ENCODE measurements at regions of chr10 and their contacts with region 1.

Region 1: DNA sequence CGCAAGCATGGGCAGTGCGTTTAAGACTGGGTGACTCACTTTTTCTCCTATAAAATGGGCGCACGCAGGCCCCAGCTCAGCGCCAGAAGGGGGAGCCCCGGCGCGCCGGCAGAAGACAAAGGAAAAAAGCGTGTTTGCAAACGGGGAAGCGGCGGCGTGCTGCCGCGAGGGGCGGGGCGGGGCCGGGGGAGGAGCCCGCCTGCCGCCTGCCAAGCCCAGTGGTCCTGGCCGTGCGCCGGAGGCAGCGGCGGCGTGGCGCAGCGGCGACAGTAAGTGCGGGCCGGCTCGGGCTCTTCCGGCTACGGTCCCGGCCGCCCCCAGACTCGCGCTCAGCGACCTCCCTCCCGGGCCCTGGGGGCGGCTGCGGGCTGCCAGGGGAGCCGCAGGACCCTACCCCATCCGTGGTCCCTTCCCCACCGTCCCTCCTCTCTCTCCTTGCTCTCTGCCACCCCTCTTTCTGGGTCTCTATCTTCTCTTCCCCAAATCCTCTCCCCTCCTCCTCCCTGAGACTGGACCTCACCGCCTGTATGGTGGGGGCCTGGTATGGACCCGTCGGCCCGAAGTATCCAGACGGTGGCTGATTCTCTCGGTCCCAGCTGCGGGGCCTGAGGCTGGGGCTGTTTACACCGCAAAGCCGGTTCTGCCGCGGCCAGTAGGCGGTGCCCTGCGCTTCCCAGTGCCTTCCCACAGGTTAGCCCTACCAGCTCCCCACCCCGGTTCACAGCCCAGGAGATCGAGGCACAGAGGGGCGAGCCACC is at the start of gene SLC29A3:
- DNase-seq: peak; percentile 79 to 83
- ATAC-seq: peak; percentile 93 to 96
- H3K4me3 ChIP-seq: peak within 1 kb of the TSS; percentile 78
- H3K27ac ChIP-seq: peak within 1 kb of the TSS; percentile 89 to 96
- H3K4me1 ChIP-seq: peaks cover 14% of the 10 kb centered on the region
- CTCF ChIP-seq: peak; percentile 81
- EP300 ChIP-seq: no peak
- POLR2A ChIP-seq: peak; percentile 73
- RAD21 ChIP-seq: peak; percentile 79 to 81
- polyA plus RNA-seq, gene SLC29A3: 7.2 and 12.6 TPM in 2 replicates

Region 2: GRCh38 chr10:71161425-71161824 is 157.8 kb before region 1 on chr10:
- CTCF ChIA-PET with region 1: no interaction called
- POLR2A ChIA-PET with region 1: no interaction called
- DNase-seq: no peak
- ATAC-seq: no peak
- H3K4me3 ChIP-seq: no peak overlapping the region
- H3K27ac ChIP-seq: no peak overlapping the region
- H3K4me1 ChIP-seq: no peaks in the 10 kb centered on the region
- CTCF ChIP-seq: no peak
- EP300 ChIP-seq: no peak
- POLR2A ChIP-seq: no peak
- RAD21 ChIP-seq: no peak

Region 3: DNA sequence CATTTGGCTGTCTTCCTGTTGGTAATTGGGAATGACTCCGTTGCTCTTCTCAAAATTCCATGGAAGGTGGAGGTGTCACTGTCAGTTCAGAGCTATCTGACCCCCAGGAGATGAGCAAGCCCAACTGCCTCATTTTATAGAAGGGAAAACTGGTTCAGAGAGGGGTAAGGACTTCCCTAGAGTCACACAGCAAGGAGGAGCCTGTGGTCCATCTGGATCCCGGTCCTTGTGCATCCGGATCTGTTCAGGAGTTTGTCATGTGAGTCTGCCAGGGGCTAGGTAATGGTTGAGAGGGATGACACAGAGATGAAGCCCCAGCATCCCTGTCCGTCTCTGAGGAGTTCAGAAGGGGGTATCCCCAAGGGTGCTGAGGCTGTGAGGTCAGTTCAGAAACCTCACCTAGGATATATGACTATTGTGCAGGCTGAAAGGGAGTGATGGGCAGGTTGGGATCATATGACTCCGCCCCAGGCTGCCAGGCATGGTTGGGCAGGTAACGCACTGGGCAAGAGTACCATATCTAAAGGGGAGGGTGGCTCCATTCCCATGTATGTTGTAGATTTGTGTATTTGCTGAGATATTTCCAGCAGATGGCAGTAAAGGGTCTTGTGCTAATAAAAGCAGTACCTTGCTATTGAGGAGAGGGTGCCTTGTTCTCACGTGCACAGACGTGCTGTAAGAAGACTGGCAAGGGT is 16.2 kb before region 1 on chr10:
- CTCF ChIA-PET with region 1: interaction called, 41 read pairs
- POLR2A ChIA-PET with region 1: no interaction called
- DNase-seq: peak; percentile 73
- ATAC-seq: peak; percentile 75 to 90
- H3K4me3 ChIP-seq: no peak overlapping the region
- H3K27ac ChIP-seq: no peak overlapping the region
- H3K4me1 ChIP-seq: no peaks in the 10 kb centered on the region
- CTCF ChIP-seq: peak; percentile 56
- EP300 ChIP-seq: no peak
- POLR2A ChIP-seq: no peak
- RAD21 ChIP-seq: peak; percentile 37 to 52; a peak in 4 of 5 replicates

Region 4: GRCh38 chr10:71343392-71343773 is 24.2 kb after region 1 on chr10:
- CTCF ChIA-PET with region 1: interaction called, 61 read pairs
- POLR2A ChIA-PET with region 1: interaction called, 9 read pairs
- DNase-seq: peak; percentile 32 to 51
- ATAC-seq: peak in 1 of 2 experiments; percentile 55; a peak in 3 of 6 replicates
- H3K4me3 ChIP-seq: no peak overlapping the region
- H3K27ac ChIP-seq: peak overlapping the region; percentile 80 to 92
- H3K4me1 ChIP-seq: peaks cover 79% of the 10 kb centered on the region
- CTCF ChIP-seq: no peak
- EP300 ChIP-seq: peak in 1 of 2 experiments; percentile 39; a peak in 1 of 5 replicates
- POLR2A ChIP-seq: no peak
- RAD21 ChIP-seq: no peak

Region 5: GRCh38 chr10:71378336-71379117 is 59.3 kb after region 1 on chr10:
- CTCF ChIA-PET with region 1: interaction called, 977 read pairs
- POLR2A ChIA-PET with region 1: interaction called, 36 read pairs
- DNase-seq: no peak
- ATAC-seq: no peak
- H3K4me3 ChIP-seq: no peak overlapping the region
- H3K27ac ChIP-seq: no peak overlapping the region
- H3K4me1 ChIP-seq: peaks cover 12% of the 10 kb centered on the region
- CTCF ChIP-seq: no peak
- EP300 ChIP-seq: no peak
- POLR2A ChIP-seq: no peak
- RAD21 ChIP-seq: no peak

Region 6: GRCh38 chr10:71396084-71396720 is 77.0 kb after region 1 on chr10:
- CTCF ChIA-PET with region 1: interaction called, 977 read pairs
- POLR2A ChIA-PET with region 1: interaction called, 22 read pairs
- DNase-seq: peak; percentile 75 to 76
- ATAC-seq: peak; percentile 86 to 94
- H3K4me3 ChIP-seq: peak overlapping the region; percentile 58
- H3K27ac ChIP-seq: peak overlapping the region; percentile 71 to 91
- H3K4me1 ChIP-seq: peaks cover 7% of the 10 kb centered on the region; the same call in 1 of the 3 replicates
- CTCF ChIP-seq: peak; percentile 77
- EP300 ChIP-seq: no peak
- POLR2A ChIP-seq: no peak
- RAD21 ChIP-seq: peak; percentile 80 to 92

Region 7: DNA sequence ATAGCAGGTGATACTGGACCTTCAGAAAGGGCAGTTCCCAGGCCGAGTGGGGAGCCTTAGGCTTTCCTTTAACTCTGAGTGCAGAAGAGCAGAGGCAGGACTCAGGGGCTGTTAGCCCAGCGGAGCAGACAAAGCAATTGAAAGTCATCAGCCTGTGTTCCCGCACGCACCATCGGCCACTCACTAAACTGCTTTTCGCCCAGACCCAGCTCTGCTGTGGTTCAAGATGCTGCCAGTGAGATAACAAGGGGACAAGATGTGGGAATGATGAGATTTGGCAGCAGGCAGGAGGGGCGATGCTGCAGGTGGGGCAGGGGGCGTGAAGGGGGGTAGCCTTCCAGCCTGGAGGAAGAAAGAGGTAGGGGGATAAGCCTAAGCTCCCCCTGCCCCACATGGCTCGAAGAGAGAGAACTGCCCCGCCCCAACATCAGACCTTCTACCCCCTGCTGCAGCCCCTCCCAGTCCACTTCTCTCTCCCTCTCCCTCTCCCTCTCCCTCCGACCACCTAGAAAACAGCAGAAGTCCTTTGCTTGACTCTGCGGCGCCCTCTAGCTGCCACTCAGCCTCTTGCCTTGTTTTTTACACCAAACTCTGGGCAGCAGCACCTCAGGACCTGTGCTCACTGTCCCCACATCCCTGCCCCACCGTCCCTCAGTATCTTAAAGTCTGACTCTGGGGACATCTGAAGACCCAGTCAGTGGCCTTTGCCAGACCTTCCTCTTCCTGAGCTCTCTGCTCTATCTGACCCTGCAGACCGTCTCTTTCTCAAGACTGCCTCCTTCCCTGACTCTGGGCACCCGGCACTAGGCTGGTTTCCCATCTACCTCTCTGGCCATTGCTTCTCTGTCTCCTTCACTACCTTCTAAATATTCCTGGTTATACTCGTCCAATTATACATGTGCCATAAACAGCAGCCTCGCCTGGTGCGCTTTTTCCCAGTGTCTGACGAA is 289.9 kb after region 1 on chr10:
- CTCF ChIA-PET with region 1: interaction called, 67 read pairs
- POLR2A ChIA-PET with region 1: no interaction called
- DNase-seq: peak; percentile 63 to 71
- ATAC-seq: peak; percentile 58 to 86
- H3K4me3 ChIP-seq: no peak overlapping the region
- H3K27ac ChIP-seq: no peak overlapping the region
- H3K4me1 ChIP-seq: peaks cover 12% of the 10 kb centered on the region; the same call in 2 of the 3 replicates
- CTCF ChIP-seq: peak; percentile 69
- EP300 ChIP-seq: no peak
- POLR2A ChIP-seq: no peak
- RAD21 ChIP-seq: peak; percentile 70 to 78

Region 8: GRCh38 chr10:71771821-71772617 is 452.8 kb after region 1 on chr10:
- CTCF ChIA-PET with region 1: interaction called, 10 read pairs
- POLR2A ChIA-PET with region 1: no interaction called
- DNase-seq: peak; percentile 40 to 57
- ATAC-seq: peak; percentile 2 to 10; a peak in 3 of 6 replicates
- H3K4me3 ChIP-seq: peak overlapping the region; percentile 64; the same call in 2 of the 3 replicates
- H3K27ac ChIP-seq: peak overlapping the region; percentile 79 to 98
- H3K4me1 ChIP-seq: peaks cover 62% of the 10 kb centered on the region
- CTCF ChIP-seq: no peak
- EP300 ChIP-seq: no peak
- POLR2A ChIP-seq: no peak
- RAD21 ChIP-seq: no peak